ENCODE measurements at regions of chr7 and their contacts with region 1.

Region 1: DNA sequence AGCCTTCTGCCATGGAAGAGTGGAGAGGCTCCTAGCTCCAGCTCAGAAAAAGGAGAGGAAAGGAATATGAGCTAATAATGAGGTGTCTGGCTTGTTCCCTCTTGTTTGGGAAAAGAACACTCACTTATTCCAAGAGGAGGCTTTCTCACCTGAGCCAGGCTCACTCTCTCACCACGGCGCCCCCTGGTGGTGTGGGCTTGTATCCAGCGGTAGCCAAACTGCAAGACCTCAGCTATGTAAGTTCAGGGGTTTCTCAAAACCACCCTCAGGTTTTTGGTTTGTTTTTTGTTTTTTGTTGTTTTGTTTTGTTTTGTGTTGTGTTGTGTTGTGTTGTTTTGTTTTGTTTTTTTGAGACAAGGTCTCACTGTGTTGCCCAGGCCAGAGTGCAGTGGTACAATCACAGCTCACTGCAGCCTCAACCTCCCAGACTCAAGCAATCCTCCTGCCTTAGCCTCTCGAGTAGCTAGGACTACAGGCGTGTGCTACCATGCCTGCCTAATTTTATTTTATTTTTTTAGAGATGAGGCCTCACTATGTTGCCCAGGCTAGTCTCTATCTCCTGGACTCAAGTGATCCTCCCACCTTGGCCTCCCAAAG is 124.0 kb downstream of the TMEM130 start:
- DNase-seq: peak; percentile 76 to 87
- H3K4me3 ChIP-seq: no peak overlapping the region
- H3K4me3 Mint-ChIP-seq: no peak overlapping the region
- H3K27ac Mint-ChIP-seq: no peak overlapping the region
- H3K4me1 ChIP-seq: no peaks in the 10 kb centered on the region
- H3K4me1 Mint-ChIP-seq: no peaks in the 10 kb centered on the region
- H3K27me3 ChIP-seq: no peaks in the 10 kb centered on the region
- H3K27me3 Mint-ChIP-seq: no peaks in the 10 kb centered on the region
- CTCF ChIP-seq: peak; percentile 88 to 93

Region 2: DNA sequence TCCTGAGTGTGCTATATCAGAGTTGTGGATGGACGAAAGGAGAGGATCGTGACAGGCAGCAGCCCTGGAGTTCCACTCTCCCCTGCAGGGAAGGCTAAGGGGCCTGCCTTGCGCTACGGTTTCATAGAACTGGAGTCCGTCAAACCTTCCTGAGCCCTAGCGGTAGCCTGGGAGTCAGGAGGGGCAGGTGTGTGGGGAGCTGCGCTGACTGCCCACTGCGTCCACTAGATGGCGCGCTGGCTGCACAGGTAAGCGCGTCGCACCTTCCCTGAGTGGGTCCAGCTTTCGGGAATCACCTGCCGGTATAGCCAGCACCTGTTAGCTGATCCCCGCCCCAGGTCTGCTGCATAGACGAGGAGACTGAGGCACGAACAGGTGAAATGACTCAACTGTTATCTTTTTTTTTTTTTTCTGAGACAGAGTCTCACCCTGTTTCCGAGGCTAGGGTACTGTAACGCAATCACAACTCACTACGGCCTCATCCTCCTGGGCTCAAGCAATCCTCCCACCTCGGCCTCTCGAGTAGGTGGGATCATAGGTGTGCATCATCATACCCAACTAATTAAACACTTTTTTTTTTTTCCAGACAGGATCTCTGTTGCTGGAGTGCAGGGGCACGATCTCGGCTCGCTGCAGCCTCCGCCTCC is 324.7 kb before region 1 on chr7:
- CTCF ChIA-PET with region 1: interaction called, 10 read pairs
- POLR2A ChIA-PET with region 1: no interaction called
- intact Hi-C with region 1: no loop called
- DNase-seq: peak; percentile 85 to 86
- H3K4me3 ChIP-seq: no peak overlapping the region
- H3K4me3 Mint-ChIP-seq: no peak overlapping the region
- H3K27ac Mint-ChIP-seq: no peak overlapping the region
- H3K4me1 ChIP-seq: peaks cover 38% of the 10 kb centered on the region
- H3K4me1 Mint-ChIP-seq: peaks cover 23% of the 10 kb centered on the region
- H3K27me3 ChIP-seq: no peaks in the 10 kb centered on the region
- H3K27me3 Mint-ChIP-seq: no peaks in the 10 kb centered on the region
- CTCF ChIP-seq: peak; percentile 89 to 92